ENCODE measurements at regions of chr17 and their contacts with region 1.

Region 1: DNA sequence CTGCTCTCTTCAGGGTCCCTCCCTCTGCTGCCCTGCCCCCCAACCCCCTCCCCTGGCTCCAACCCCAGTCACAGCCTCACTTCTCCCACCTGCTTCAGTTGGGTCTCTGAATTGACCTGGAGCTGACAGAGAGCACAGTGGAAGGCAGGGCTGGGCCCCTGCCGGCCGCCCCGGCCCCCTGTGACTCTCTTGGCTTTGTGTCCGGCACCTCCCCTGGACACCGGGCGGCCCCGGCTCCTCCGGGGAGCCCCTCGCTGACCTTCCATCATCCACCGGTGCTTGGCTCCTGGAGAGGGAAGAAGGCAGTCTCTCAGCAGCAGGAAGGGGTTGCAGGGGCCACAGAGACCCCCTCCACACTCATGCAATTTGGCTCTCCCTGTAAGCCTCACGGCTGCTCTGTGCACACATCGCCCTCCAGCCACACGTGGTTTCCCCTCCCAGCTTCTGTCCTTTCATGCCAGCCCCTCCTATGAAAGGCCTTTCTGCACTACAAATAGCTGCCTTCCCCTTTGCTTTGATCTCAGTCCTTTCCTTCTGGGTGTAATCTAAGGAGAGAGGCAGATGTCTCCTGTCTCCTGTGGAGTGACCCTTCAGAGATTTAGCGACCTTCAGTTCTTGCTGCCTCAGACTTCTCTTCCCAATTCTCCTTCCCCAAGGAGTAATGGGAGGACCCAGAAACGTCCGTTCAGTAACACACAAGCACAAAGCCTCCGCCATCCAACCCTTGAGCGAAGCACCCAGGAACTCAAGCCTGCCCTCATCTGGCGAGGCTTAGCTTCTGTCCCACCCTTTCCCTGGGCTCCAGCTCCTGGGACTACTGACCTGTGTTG is 8.3 kb downstream of the NKIRAS2 start:
- DNase-seq: peak; percentile 50 to 73 (median 60)
- ATAC-seq: peak; percentile 70
- H3K4me3 ChIP-seq: no peak overlapping the region
- H3K27ac ChIP-seq: no peak overlapping the region
- H3K4me1 ChIP-seq: peaks cover 38 to 43% of the 10 kb centered on the region in 2 experiments
- H3K27me3 ChIP-seq: no peaks in the 10 kb centered on the region
- CTCF ChIP-seq: peak; percentile 72 to 81 (median 75)
- EP300 ChIP-seq: no peak
- POLR2A ChIP-seq: no peak
- RAD21 ChIP-seq: peak in 1 of 2 experiments; percentile 66; a peak in 2 of 4 replicates

Region 2: GRCh38 chr17:41768682-41769288 is 259.4 kb before region 1 on chr17:
- CTCF ChIA-PET with region 1: no interaction called
- POLR2A ChIA-PET with region 1: no interaction called
- in situ Hi-C with region 1: no loop called
- intact Hi-C with region 1: no loop called
- DNase-seq: no peak
- ATAC-seq: no peak
- H3K4me3 ChIP-seq: no peak overlapping the region
- H3K27ac ChIP-seq: no peak overlapping the region
- H3K4me1 ChIP-seq: peaks cover 0 to 16% of the 10 kb centered on the region in 2 experiments; a peak in 2 of 5 replicates
- H3K27me3 ChIP-seq: no peaks in the 10 kb centered on the region
- CTCF ChIP-seq: no peak
- EP300 ChIP-seq: no peak
- POLR2A ChIP-seq: no peak
- RAD21 ChIP-seq: no peak

Region 3: DNA sequence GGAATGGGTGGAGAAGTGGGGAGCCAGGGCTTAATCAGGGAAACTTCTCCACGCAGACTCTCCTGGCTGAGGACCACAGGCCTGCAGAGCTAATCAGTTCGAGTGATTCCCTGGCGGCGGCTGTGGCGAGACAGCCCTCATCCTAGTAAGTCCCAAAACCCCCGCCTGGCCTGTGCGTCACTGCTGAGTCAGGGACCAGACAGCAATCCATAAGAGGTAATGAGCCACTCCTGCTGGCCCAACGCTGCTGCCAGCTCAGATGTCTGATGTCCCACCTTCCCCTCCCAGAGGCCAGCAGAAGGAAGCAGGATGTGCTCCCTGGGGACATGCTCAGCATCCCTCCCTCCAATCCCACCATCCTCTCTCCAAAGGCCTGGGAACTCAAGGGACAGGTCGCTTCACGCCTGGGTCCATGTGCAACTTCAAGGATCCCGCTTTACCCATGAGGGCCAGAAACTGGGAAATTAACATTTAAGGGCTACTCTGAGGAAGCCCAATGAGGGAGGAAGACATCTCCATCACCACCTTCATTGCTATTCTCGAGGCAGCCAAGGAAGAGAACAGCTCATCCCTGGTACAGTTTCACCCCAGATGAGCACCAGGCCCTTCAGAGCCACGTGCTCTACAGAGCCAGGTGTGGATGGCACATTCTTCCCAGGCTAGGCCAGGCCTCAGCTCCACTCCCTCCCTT is 117.3 kb before region 1 on chr17:
- CTCF ChIA-PET with region 1: no interaction called
- POLR2A ChIA-PET with region 1: no interaction called
- in situ Hi-C with region 1: no loop called
- intact Hi-C with region 1: no loop called
- DNase-seq: no peak
- ATAC-seq: no peak
- H3K4me3 ChIP-seq: no peak overlapping the region
- H3K27ac ChIP-seq: no peak overlapping the region
- H3K4me1 ChIP-seq: peaks cover 6 to 21% of the 10 kb centered on the region in 2 experiments; a peak in 4 of 5 replicates
- H3K27me3 ChIP-seq: no peaks in the 10 kb centered on the region
- CTCF ChIP-seq: no peak
- EP300 ChIP-seq: no peak
- POLR2A ChIP-seq: no peak
- RAD21 ChIP-seq: no peak

Region 4: GRCh38 chr17:42101513-42102319 is 73.5 kb after region 1 on chr17:
- CTCF ChIA-PET with region 1: interaction called, 11 read pairs
- POLR2A ChIA-PET with region 1: interaction called, 4 read pairs
- in situ Hi-C with region 1: no loop called
- intact Hi-C with region 1: loop called (anchors 1 kb)
- DNase-seq: peak; percentile 87 to 89 (median 87)
- ATAC-seq: peak; percentile 93
- H3K4me3 ChIP-seq: no peak overlapping the region
- H3K27ac ChIP-seq: no peak overlapping the region
- H3K4me1 ChIP-seq: peaks cover 7 to 27% of the 10 kb centered on the region in 2 experiments; a peak in 3 of 5 replicates
- H3K27me3 ChIP-seq: peaks cover 0 to 12% of the 10 kb centered on the region in 2 experiments; a peak in 3 of 5 replicates
- CTCF ChIP-seq: peak; percentile 92 to 98 (median 94)
- EP300 ChIP-seq: no peak
- POLR2A ChIP-seq: no peak
- RAD21 ChIP-seq: peak; percentile 85 to 92

Region 5: GRCh38 chr17:42112552-42113176 is 84.5 kb after region 1 on chr17 and contains the start of gene DHX58:
- CTCF ChIA-PET with region 1: interaction called, 23 read pairs
- POLR2A ChIA-PET with region 1: interaction called, 3 read pairs
- in situ Hi-C with region 1: loop called (anchors 5 kb)
- intact Hi-C with region 1: loop called (anchors 2 kb)
- DNase-seq: peak; percentile 42 to 71 (median 56)
- ATAC-seq: peak; percentile 72
- H3K4me3 ChIP-seq: no peak within 1 kb of the TSS
- H3K27ac ChIP-seq: peak within 1 kb of the TSS; percentile 53; the same call in 2 of the 3 replicates
- H3K4me1 ChIP-seq: peaks cover 12 to 59% of the 10 kb centered on the region in 2 experiments; a peak in 4 of 5 replicates
- H3K27me3 ChIP-seq: no peaks in the 10 kb centered on the region
- CTCF ChIP-seq: no peak
- EP300 ChIP-seq: no peak
- POLR2A ChIP-seq: peak; percentile 45; the same call in 1 of the 2 replicates
- RAD21 ChIP-seq: no peak
- polyA plus RNA-seq, gene DHX58: 0.15 to 0.25 TPM